Ascending aorta (tissue), 2 donors: ENCODE measurements at regions of chr4 and their contacts with region 1.

Region 1: DNA sequence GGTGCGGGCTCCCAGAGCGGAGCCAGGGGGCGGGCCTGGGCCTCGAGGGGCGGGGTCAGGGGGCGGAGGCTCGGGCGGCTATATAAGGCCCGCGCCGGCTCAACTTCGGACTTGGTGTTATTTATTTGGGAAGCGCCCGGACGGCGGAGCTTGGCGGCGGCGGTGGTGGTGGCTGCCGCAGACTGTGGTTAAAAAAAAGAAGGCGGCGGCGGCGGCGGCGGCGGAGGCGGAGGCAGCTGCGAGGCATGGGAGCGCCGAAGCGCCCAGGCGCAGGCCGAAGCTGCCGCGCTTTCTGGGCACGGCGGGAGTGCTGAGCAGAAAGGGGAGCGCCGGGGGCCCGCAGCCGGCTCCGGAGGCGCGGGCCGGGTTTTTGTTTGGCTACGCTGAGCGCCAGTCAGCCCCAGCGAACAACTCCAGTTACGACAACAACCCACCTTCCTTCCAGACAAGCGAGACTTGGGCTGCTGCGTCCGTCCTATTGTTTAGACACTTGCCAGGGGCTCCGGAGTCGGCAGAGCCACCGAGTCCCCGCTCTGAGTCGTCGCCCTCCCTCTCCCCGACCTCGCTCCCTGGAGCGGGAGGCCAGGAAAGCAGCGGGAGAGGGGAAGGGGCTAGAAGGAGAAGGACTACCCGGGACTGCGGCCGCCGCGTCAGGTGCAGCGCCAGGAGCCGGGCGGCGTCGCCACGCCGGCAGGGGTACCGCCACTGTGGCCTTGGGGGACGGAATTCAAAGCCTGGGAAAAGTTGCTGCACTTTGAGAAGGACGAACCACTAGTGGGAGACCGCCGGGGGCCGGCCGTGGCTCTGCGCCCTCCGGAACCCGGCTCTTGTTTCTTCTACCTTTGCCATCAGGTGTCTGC is at the start of gene SLIT2:
- DNase-seq: peak; percentile 39 to 93
- H3K4me3 ChIP-seq: peak within 1 kb of the TSS; percentile 82 to 83
- H3K27ac ChIP-seq: peak within 1 kb of the TSS; percentile 78 to 81
- H3K4me1 ChIP-seq: peaks cover 0 to 2% of the 10 kb centered on the region in 2 donors
- H3K27me3 ChIP-seq: no peaks in the 10 kb centered on the region
- CTCF ChIP-seq: peak in 1 of 3 experiments; percentile 1
- total RNA-seq, gene SLIT2: 25.2 TPM

Region 2: GRCh38 chr4:19224820-19225219 is 1027.2 kb before region 1 on chr4:
- intact Hi-C with region 1: loop called (anchors 5 kb)
- DNase-seq: no peak
- H3K4me3 ChIP-seq: no peak overlapping the region
- H3K27ac ChIP-seq: no peak overlapping the region
- H3K4me1 ChIP-seq: no peaks in the 10 kb centered on the region
- H3K27me3 ChIP-seq: no peaks in the 10 kb centered on the region
- CTCF ChIP-seq: peak in 1 of 3 experiments; percentile 28

Region 3: DNA sequence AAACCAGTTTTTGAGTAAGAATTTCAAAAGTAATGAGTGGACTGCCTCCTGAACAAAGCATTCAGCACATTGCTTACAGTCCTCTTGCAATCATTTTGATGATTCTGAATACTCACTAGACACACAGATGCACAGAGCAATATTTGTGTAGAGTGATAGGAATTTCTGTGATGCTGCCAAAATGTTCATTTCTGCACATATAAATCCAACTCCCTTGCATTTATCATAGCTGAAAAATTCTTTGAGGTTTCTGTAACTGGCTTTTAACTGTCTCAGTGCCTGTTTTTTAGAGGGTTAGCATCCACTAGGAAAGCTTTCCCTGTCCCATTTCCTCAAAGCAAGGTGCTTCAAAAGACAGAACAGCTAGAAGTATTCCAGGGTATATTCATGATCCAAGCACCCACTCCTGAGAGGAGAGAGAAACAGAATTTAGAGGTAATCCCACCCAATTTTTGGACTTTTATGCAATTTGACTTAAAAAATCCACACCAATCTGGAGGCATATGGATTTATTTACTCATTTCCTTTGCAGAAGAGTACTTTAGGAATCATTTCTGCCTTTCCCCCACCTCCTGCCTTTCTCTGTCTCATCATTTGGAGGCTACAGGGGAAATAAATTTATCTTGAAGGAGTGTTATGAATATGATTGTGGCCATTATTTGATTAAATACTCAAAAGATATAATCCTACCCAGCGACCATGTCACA is 234.8 kb before region 1 on chr4:
- intact Hi-C with region 1: no loop called
- DNase-seq: no peak
- H3K4me3 ChIP-seq: no peak overlapping the region
- H3K27ac ChIP-seq: no peak overlapping the region
- H3K4me1 ChIP-seq: no peaks in the 10 kb centered on the region
- H3K27me3 ChIP-seq: no peaks in the 10 kb centered on the region
- CTCF ChIP-seq: no peak

Region 4: GRCh38 chr4:20272411-20272872 is 20.4 kb after region 1 on chr4:
- intact Hi-C with region 1: loop called (anchors 2 kb)
- DNase-seq: no peak
- H3K4me3 ChIP-seq: no peak overlapping the region
- H3K27ac ChIP-seq: no peak overlapping the region
- H3K4me1 ChIP-seq: peaks cover 0 to 12% of the 10 kb centered on the region in 2 donors
- H3K27me3 ChIP-seq: no peaks in the 10 kb centered on the region
- CTCF ChIP-seq: no peak

Region 5: GRCh38 chr4:20299515-20299914 is 47.5 kb after region 1 on chr4:
- intact Hi-C with region 1: loop called (anchors 2 kb)
- DNase-seq: no peak
- H3K4me3 ChIP-seq: no peak overlapping the region
- H3K27ac ChIP-seq: no peak overlapping the region
- H3K4me1 ChIP-seq: no peaks in the 10 kb centered on the region
- H3K27me3 ChIP-seq: no peaks in the 10 kb centered on the region
- CTCF ChIP-seq: peak in 2 of 3 experiments; percentile 31 to 33

Region 6: DNA sequence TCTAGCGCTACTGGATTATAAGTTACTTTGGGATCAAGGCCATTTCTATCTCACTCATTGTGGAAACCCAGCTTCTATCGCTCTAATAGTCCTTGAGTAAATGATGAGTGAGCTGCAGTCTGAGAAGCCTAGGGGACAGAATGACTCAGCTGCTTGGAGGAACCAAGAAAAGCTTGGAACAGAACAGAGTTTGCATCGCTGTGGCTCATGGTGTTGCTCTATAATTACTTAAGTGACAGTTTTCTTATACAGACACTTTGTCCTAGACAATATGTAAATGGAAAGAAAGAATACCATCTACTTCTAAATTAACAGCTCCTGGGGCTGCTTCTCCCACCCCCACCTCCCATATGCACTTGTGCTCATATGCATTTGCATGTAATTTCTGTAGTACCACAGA is 156.6 kb after region 1 on chr4:
- intact Hi-C with region 1: loop called (anchors 5 kb)
- DNase-seq: no peak
- H3K4me3 ChIP-seq: no peak overlapping the region
- H3K27ac ChIP-seq: peak overlapping the region; percentile 14 to 41
- H3K4me1 ChIP-seq: peaks cover 0 to 5% of the 10 kb centered on the region in 2 donors
- H3K27me3 ChIP-seq: no peaks in the 10 kb centered on the region
- CTCF ChIP-seq: no peak

Region 7: GRCh38 chr4:20700007-20700761 is 448.2 kb after region 1 on chr4 and contains the start of gene PACRGL:
- intact Hi-C with region 1: loop called (anchors 5 kb)
- DNase-seq: peak; percentile 84 to 97
- H3K4me3 ChIP-seq: peak within 1 kb of the TSS; percentile 65 to 89
- H3K27ac ChIP-seq: peak within 1 kb of the TSS; percentile 64 to 85
- H3K4me1 ChIP-seq: peaks cover 0 to 4% of the 10 kb centered on the region in 2 donors
- H3K27me3 ChIP-seq: no peaks in the 10 kb centered on the region
- CTCF ChIP-seq: no peak
- total RNA-seq, gene PACRGL: 18.3 TPM